Endothelial cell of umbilical vein (primary cell): ENCODE measurements at regions of chr2 and their contacts with region 1.

Region 1: GRCh38 chr2:130355578-130356431 is at the start of gene PTPN18:
- DNase-seq: peak; percentile 89
- H3K4me3 ChIP-seq: peak within 1 kb of the TSS; percentile 46 to 81 (median 53)
- H3K27ac ChIP-seq: no peak within 1 kb of the TSS
- H3K4me1 ChIP-seq: peaks cover 4% of the 10 kb centered on the region
- H3K27me3 ChIP-seq: no peaks in the 10 kb centered on the region
- CTCF ChIP-seq: peak; percentile 64 to 69
- POLR2A ChIP-seq: peak; percentile 75
- total RNA-seq, gene PTPN18: 31.5 and 39.6 TPM in 2 replicates

Region 2: DNA sequence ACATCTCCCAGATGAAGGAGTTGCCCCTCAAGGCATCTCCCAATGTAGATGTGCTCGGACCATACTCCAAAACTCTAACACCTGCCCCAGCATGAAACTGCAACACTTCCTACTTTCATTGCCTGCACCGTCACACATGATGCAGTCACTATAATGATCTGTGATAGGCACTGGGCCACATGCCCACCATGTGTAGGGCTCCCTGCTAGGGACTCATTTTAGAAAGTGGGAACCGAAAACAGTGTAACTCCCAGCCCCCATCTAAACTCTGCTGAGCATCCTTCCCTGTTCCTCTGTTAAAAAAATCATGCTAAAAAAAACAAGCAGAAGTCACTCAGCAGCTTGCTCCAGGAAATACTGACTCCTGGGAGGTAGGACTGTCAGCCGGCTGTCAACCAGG is 872.4 kb before region 1 on chr2:
- CTCF ChIA-PET with region 1: no interaction called
- POLR2A ChIA-PET with region 1: no interaction called
- dilution Hi-C with region 1: no loop called
- intact Hi-C with region 1: no loop called
- DNase-seq: no peak
- H3K4me3 ChIP-seq: no peak overlapping the region
- H3K27ac ChIP-seq: no peak overlapping the region
- H3K4me1 ChIP-seq: no peaks in the 10 kb centered on the region
- H3K27me3 ChIP-seq: no peaks in the 10 kb centered on the region
- CTCF ChIP-seq: no peak
- POLR2A ChIP-seq: no peak

Region 3: DNA sequence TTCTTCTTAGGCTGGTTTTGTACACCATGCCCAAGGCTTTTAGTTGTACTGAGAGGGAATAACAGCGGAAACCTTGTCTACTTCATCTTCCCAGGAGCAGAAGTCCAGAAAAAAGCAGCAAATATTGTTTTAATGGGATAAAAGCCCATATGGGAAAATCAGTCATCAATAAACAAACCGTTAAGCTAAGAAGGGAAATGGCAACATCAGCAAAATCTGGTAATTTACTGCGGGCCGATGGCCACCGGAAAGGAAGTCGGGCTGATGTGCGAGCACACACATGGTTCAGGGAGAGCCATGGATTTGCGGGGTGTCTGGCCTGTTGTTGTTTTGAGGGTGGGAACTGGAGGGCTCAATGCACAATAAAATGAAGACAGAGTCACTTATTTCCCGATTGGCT is 677.1 kb before region 1 on chr2:
- CTCF ChIA-PET with region 1: no interaction called
- POLR2A ChIA-PET with region 1: no interaction called
- dilution Hi-C with region 1: no loop called
- intact Hi-C with region 1: no loop called
- DNase-seq: no peak
- H3K4me3 ChIP-seq: no peak overlapping the region
- H3K27ac ChIP-seq: no peak overlapping the region
- H3K4me1 ChIP-seq: no peaks in the 10 kb centered on the region
- H3K27me3 ChIP-seq: no peaks in the 10 kb centered on the region
- CTCF ChIP-seq: no peak
- POLR2A ChIP-seq: no peak

Region 4: GRCh38 chr2:130372055-130372832 is 16.4 kb after region 1 on chr2:
- CTCF ChIA-PET with region 1: interaction called, 15 read pairs
- POLR2A ChIA-PET with region 1: interaction called, 3 read pairs
- dilution Hi-C with region 1: no loop called
- intact Hi-C with region 1: loop called (anchors 1 kb)
- DNase-seq: peak; percentile 54
- H3K4me3 ChIP-seq: peak overlapping the region; percentile 47 to 79 (median 72)
- H3K27ac ChIP-seq: peak overlapping the region; percentile 76
- H3K4me1 ChIP-seq: peaks cover 14% of the 10 kb centered on the region
- H3K27me3 ChIP-seq: no peaks in the 10 kb centered on the region
- CTCF ChIP-seq: peak; percentile 75 to 76
- POLR2A ChIP-seq: peak; percentile 56

Region 5: DNA sequence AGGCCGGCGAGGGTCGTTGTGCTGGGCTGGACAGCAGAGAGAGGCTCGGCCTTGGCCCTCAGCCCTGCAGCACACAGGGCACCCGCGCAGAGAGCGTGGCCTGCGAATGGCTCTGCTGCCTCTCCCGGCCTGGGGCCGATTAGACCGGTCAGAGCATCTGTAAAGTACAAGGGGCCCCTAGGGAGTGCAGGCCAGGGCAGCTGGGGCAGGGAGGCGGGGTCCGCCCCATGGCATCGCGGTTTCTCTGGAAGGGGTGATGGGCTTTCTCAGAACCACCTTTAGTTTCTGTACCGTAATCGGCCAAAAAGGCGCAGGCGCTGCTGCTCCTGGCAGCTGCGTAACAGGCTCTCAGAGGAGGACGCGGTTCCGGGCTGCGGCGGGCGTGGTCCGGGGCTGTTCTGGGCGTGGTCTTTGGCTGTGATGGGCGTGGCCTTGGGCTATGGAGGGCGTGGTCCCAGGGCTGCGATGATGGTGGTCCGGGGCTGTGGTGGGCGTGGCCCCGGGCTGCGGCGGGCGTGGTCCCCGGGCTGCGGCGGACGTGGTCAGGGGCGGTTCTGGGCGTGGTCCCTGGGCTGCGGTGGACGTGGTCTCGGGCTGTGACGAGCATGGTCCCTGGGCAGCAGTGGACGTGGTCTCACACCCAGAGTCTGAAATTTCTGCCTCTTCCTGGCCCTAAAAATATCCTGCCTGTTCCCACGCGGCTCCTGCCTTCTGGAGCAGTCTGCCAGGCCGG is 371.6 kb after region 1 on chr2:
- CTCF ChIA-PET with region 1: no interaction called
- POLR2A ChIA-PET with region 1: no interaction called
- dilution Hi-C with region 1: no loop called
- intact Hi-C with region 1: loop called (anchors 10 kb)
- DNase-seq: peak; percentile 72
- H3K4me3 ChIP-seq: peak overlapping the region; percentile 30 to 47 (median 33)
- H3K27ac ChIP-seq: no peak overlapping the region
- H3K4me1 ChIP-seq: peaks cover 8% of the 10 kb centered on the region
- H3K27me3 ChIP-seq: no peaks in the 10 kb centered on the region
- CTCF ChIP-seq: peak in 1 of 2 donors; percentile 8
- POLR2A ChIP-seq: peak; percentile 40